Left ventricle myocardium superior (tissue), 1 donor: ENCODE measurements at regions of chr7 and their contacts with region 1.

Region 1: DNA sequence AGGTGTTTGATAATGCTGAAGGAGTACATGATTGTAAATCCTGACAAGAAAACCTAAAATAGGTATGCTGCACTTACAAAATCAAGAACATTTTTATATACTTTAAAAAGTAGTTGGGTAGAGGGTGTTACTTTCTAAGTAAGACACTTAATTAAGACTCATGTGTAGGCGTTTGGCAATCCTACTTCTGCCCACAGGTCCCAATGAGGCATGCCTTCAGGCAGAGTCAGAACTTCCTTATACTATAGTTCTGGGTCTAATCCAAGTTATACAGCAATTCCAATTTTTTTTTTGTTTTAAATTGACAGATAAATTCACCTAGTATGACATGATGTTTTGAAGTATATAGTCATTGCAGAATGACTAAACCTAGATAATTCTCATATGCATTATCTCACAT is 1188.5 kb upstream of the PHF14 start:
- DNase-seq: no peak
- ATAC-seq: no peak

Region 2: GRCh38 chr7:9752033-9752432 is 33.2 kb before region 1 on chr7:
- intact Hi-C with region 1: no loop called
- DNase-seq: no peak
- ATAC-seq: no peak

Region 3: DNA sequence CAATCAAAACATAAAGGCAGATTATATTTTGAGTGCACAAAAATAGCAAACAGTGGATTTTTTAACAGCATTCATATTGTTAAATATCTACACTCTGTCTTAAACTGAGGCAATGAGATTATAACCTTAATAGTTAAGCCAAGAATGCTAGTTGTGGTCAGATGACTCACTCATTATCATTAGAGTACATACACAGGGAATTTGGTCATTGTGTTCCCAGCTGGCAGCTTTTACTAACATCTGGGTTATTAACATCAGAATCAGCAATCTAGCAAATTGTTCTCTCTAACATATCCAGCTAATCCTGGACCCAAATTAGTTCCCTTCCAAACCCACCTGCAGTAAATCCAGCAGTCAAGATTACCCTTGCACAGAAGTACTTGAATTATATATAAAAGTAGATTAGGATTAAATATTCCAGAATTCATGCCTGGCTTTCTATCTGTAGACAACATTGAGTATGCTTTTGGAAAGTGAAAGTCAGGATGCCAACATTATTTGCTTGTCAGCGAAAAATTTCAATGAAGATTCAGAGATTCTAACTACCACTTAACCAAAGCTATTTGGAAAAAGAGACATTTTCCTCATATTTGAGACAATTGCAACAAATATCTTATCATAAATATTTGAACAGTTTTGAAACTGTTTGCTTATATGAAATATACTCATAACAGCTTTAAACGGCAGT is 152.9 kb after region 1 on chr7:
- intact Hi-C with region 1: loop called (anchors 5 kb)
- DNase-seq: no peak
- ATAC-seq: no peak